ENCODE measurements at regions of chr1 and their contacts with region 1.

Region 1: DNA sequence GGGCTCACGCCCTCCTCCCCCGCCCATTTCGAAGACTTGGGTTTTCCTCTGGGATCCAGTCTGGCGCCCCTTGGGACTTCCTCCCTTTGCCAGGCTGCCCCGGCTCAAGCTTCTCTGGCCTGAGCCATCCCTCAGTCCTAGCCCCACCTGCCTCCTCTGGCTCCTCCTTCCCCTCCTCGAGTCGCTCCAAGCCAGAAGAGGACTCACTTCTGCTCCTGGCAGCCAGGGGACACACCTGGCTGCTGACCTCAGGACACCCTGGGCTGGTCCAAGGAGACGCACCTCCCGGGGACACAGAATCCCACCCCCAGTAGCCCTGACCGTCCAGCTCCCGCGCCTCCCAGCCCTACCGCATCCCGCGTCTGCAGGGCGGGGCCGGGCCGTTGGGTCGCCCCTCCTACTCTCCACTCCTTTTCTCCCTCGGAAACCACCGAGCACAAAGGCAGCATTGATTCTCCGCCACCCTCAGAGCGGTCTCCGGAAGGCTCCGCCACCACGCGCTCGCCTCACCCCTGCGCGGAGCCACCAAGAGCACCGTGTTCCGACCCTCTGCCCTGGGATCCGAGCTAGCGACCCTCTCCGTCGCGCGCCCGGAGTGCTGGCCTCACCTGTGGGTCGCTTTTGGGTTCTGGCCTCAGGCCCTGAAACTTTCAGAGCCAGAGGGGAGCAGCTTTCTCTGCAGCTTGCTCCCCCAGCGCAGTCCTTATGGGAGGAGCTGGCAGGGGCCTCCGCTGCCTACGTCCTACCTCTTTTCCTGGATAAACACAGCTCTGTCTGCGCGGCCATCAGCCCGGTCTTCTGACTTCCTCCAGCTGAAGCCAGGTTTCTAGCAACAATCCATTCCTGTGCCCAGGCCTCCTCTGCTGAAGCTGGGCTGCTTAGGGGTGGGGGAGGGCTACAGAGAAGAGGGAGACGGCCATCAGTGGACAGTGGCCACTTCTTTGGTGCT is at the start of gene C2CD4D:
- DNase-seq: no peak
- H3K4me3 ChIP-seq: peak within 1 kb of the TSS in 1 of 3 experiments; percentile 36
- H3K27ac ChIP-seq: no peak within 1 kb of the TSS
- H3K4me1 ChIP-seq: peaks cover 12% of the 10 kb centered on the region
- H3K27me3 ChIP-seq: peaks cover 7 to 12% of the 10 kb centered on the region in 2 experiments
- CTCF ChIP-seq: no peak
- POLR2A ChIP-seq: no peak
- total RNA-seq, gene C2CD4D: 0.18 TPM in 1 of 2 replicates, not detected in the other

Region 2: GRCh38 chr1:151346769-151347522 is 492.8 kb before region 1 on chr1 and contains the start of gene RFX5:
- CTCF ChIA-PET with region 1: no interaction called
- POLR2A ChIA-PET with region 1: no interaction called
- dilution Hi-C with region 1: no loop called
- intact Hi-C with region 1: loop called (anchors 5 kb)
- DNase-seq: peak; percentile 99
- H3K4me3 ChIP-seq: peak within 1 kb of the TSS; percentile 4 to 49 (median 48)
- H3K27ac ChIP-seq: peak within 1 kb of the TSS; percentile 71
- H3K4me1 ChIP-seq: peaks cover 11% of the 10 kb centered on the region
- H3K27me3 ChIP-seq: no peaks in the 10 kb centered on the region
- CTCF ChIP-seq: no peak
- POLR2A ChIP-seq: no peak
- total RNA-seq, gene RFX5: 46.3 and 52.8 TPM in 2 replicates

Region 3: DNA sequence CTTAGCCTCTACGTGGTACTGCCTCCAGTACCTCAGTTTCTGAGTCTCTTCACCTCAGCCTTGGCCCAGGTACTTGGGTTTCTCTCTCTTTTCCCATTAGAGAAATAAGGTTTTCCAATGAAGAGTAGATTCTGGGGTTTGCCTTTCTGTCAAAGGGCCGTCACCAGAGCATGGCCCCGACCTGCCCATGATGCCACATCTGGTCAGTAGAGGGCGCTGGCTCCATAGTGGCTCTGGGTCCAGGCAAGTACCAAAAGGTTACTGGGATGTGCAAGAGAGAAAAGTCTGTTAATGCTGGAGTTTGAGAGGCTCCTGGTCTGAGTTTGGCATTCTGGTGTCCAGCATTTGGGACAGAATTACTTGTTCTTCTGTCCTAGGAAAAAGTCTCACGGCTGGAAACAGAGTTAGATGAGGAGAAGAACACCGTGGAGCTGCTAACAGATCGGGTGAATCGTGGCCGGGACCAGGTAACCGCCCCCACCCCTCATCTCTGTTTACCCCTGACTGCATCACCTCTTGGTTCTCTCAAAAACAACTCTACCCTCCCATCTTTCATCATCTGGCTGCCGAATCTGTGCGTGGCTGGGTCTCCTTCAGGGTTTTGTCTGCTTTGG is 305.0 kb before region 1 on chr1:
- CTCF ChIA-PET with region 1: interaction called, 9 read pairs
- POLR2A ChIA-PET with region 1: no interaction called
- dilution Hi-C with region 1: no loop called
- intact Hi-C with region 1: loop called (anchors 1 kb)
- DNase-seq: peak; percentile 62
- H3K4me3 ChIP-seq: no peak overlapping the region
- H3K27ac ChIP-seq: no peak overlapping the region
- H3K4me1 ChIP-seq: peaks cover 3% of the 10 kb centered on the region
- H3K27me3 ChIP-seq: no peaks in the 10 kb centered on the region
- CTCF ChIP-seq: peak; percentile 92 to 95
- POLR2A ChIP-seq: no peak

Region 4: DNA sequence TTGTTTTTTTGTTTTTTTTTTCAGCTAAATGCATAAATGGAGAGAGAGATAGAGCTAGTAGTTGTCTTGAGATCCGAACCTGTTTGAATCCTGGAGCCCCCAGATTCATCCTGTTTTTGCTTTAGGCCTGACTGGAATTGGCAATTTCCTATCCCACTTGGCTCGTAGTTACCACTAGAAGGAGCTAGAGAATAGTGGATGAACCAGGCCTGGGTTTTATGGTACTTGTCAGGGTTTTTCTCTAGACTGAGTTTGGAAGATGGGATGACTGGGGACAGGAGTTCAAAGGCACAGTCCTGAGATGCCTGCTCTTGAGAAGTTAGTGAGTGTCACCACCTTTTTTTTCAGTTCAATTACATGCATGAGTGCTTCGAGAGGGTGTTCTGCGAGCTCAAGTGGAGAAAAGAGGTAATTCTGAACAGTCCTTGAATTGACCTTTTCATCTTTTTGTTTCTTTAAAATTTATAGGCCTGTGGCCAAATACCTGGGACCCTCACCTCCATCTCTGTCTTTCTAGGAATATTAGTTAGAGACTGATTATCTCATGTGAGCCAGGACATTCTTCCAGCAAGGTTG is 146.6 kb before region 1 on chr1:
- CTCF ChIA-PET with region 1: interaction called, 10 read pairs
- POLR2A ChIA-PET with region 1: no interaction called
- dilution Hi-C with region 1: no loop called
- intact Hi-C with region 1: loop called (anchors 1 kb)
- DNase-seq: peak; percentile 52
- H3K4me3 ChIP-seq: no peak overlapping the region
- H3K27ac ChIP-seq: no peak overlapping the region
- H3K4me1 ChIP-seq: no peaks in the 10 kb centered on the region
- H3K27me3 ChIP-seq: no peaks in the 10 kb centered on the region
- CTCF ChIP-seq: peak; percentile 60 to 71
- POLR2A ChIP-seq: no peak

Region 5: DNA sequence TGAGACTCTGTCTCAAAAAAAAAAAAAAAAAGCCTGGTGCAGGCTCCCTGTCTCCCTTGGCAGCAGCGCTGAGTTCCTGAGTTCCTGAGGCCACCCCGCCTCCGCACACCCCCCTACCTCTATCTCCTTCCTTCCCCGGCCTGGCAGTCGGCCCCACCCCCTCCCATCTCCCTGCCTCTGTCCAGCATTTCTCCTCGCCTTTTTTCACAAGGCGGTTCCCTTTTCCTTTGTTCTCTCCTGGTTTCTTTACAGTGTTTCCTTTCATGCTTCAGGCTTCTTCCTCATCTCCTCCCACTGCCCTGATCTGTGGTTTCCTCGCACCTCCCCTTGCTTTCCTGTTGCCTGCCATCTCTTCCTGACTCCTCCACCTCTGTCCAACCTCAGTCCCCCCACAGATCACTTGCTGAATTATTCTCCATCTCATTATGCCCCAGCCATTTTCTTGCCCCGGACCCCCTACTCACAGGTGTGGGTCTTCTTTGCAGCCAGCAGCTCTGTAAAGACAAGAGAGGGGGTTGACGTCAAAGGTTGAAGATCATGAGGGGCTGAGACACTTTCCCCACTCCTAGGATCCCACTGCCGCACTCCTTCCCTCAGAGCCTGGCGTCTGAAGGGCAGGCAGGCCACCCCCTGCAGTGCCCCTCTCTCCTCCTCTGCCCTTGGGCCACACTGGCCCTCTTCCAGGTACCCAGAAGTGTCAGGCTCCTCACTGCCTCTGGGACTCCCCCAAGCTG is 10.6 kb before region 1 on chr1:
- CTCF ChIA-PET with region 1: interaction called, 6 read pairs
- POLR2A ChIA-PET with region 1: no interaction called
- dilution Hi-C with region 1: no loop called
- intact Hi-C with region 1: loop called (anchors 1 kb)
- DNase-seq: peak; percentile 60
- H3K4me3 ChIP-seq: no peak overlapping the region
- H3K27ac ChIP-seq: no peak overlapping the region
- H3K4me1 ChIP-seq: peaks cover 11% of the 10 kb centered on the region
- H3K27me3 ChIP-seq: no peaks in the 10 kb centered on the region
- CTCF ChIP-seq: no peak
- POLR2A ChIP-seq: no peak

Region 6: DNA sequence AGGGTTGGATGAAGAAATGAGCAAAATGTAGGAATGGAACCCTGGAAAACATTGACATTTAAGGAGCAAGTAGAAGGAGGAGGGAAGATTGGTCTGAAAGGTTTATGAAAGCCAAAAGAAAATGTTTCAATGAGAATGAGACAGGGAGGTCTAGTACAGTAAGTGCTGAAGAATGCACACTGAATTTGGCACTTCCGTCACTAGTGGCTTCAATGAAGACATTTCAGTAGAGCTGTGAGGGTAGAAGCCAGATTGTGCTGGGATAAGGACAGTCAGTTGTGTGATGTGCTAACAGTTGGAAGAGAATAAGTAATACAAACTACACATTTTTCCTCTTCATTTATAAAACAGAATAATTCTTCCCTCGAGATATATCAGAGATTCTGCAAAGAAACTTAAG is 52.5 kb after region 1 on chr1:
- CTCF ChIA-PET with region 1: no interaction called
- POLR2A ChIA-PET with region 1: no interaction called
- dilution Hi-C with region 1: no loop called
- intact Hi-C with region 1: no loop called
- DNase-seq: no peak
- H3K4me3 ChIP-seq: no peak overlapping the region
- H3K27ac ChIP-seq: no peak overlapping the region
- H3K4me1 ChIP-seq: peaks cover 10% of the 10 kb centered on the region
- H3K27me3 ChIP-seq: no peaks in the 10 kb centered on the region
- CTCF ChIP-seq: no peak
- POLR2A ChIP-seq: no peak

Region 7: GRCh38 chr1:151908228-151908691 is 68.5 kb after region 1 on chr1:
- CTCF ChIA-PET with region 1: no interaction called
- POLR2A ChIA-PET with region 1: no interaction called
- dilution Hi-C with region 1: no loop called
- intact Hi-C with region 1: no loop called
- DNase-seq: peak; percentile 26
- H3K4me3 ChIP-seq: peak overlapping the region in 1 of 3 experiments; percentile 72
- H3K27ac ChIP-seq: no peak overlapping the region
- H3K4me1 ChIP-seq: peaks cover 28% of the 10 kb centered on the region
- H3K27me3 ChIP-seq: peaks cover 0 to 3% of the 10 kb centered on the region in 2 experiments
- CTCF ChIP-seq: no peak
- POLR2A ChIP-seq: no peak

Measured in endothelial cell of umbilical vein (primary cell).